Activated naive CD4-positive, alpha-beta T cell treated with anti-CD3 and anti-CD28 coated beads, Interleukin-2, amount 10 ng/mL, durations not matched to agents 7 days and 5 days (primary cell): ENCODE measurements at regions of chr16 and their contacts with region 1.

Region 1: GRCh38 chr16:48632137-48632774 is 22.3 kb upstream of the N4BP1 start:
- DNase-seq: no peak
- H3K4me3 Mint-ChIP-seq: no peak overlapping the region
- H3K27ac Mint-ChIP-seq: no peak overlapping the region
- H3K4me1 Mint-ChIP-seq: peaks cover 6% of the 10 kb centered on the region
- H3K27me3 Mint-ChIP-seq: peaks cover 11% of the 10 kb centered on the region

Region 2: GRCh38 chr16:48231727-48232492 is 400.3 kb before region 1 on chr16:
- CTCF ChIA-PET with region 1: interaction called, 32 read pairs
- DNase-seq: peak; percentile 64
- H3K4me3 Mint-ChIP-seq: no peak overlapping the region
- H3K27ac Mint-ChIP-seq: peak overlapping the region; percentile 16
- H3K4me1 Mint-ChIP-seq: peaks cover 21% of the 10 kb centered on the region
- H3K27me3 Mint-ChIP-seq: no peaks in the 10 kb centered on the region